PC-9 (cell line): ENCODE measurements at regions of chr1 and their contacts with region 1.

Region 1: GRCh38 chr1:21931171-21932093 is 5.7 kb downstream of the HSPG2 start:
- DNase-seq: peak; percentile 87 to 94
- H3K4me3 ChIP-seq: peak overlapping the region; percentile 28; the same call in 1 of the 2 replicates
- H3K27ac ChIP-seq: peak overlapping the region; percentile 87
- H3K4me1 ChIP-seq: peaks cover 53% of the 10 kb centered on the region
- H3K27me3 ChIP-seq: no peaks in the 10 kb centered on the region
- CTCF ChIP-seq: no peak

Region 2: DNA sequence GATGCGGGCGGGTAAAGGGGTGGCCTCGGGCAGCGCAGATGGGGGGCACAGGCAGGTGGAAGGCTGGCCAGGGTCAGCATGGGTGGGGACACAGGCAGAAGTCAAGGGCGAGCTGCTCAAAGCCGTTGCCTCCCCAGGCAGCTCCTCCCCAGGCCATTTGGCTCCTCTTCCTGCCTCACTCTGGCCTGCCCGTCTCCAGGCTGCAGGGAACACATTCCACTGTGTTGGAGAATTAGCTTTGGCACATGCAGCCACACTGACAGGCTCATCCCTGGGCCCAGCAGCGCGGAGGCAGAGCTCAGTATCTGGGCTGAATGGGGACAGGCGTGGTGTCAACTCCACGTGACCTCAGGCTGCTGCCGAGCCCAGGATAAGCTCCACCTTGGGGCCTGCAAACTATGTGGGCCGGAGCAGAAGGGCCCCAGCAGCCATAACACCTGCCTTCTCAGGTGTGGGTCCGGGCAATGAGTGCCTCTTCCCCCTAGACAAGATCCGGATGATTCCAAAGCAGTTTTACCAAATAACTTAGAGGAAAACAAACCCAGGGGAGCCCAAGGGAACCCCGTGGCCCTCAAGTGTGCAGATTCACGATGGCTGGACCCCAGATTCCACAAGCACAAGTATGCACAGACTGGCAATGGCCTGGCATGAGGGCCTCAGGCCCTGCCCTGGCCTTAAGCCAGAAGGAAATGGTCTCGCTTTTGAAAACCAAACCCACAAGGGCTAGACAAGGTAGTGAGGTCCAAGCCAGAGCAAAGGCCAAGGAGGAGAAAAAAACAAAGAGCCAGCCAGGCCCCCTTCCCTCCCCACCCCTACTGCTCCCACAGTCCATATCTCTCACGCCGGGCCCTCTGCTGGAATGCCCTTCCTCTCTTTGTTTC is 34.5 kb before region 1 on chr1:
- CTCF ChIA-PET with region 1: interaction called, 4 read pairs
- POLR2A ChIA-PET with region 1: no interaction called
- intact Hi-C with region 1: loop called (anchors 2 kb)
- DNase-seq: peak in 1 of 2 experiments; percentile 72
- H3K4me3 ChIP-seq: no peak overlapping the region
- H3K27ac ChIP-seq: no peak overlapping the region
- H3K4me1 ChIP-seq: no peaks in the 10 kb centered on the region
- H3K27me3 ChIP-seq: no peaks in the 10 kb centered on the region
- CTCF ChIP-seq: no peak

Region 3: GRCh38 chr1:21904704-21905520 is 26.5 kb before region 1 on chr1:
- CTCF ChIA-PET with region 1: no interaction called
- POLR2A ChIA-PET with region 1: no interaction called
- intact Hi-C with region 1: loop called (anchors 1 kb)
- DNase-seq: peak; percentile 79 to 86
- H3K4me3 ChIP-seq: no peak overlapping the region
- H3K27ac ChIP-seq: no peak overlapping the region
- H3K4me1 ChIP-seq: no peaks in the 10 kb centered on the region
- H3K27me3 ChIP-seq: no peaks in the 10 kb centered on the region
- CTCF ChIP-seq: no peak